AG04450 (cell line): ENCODE measurements at regions of chr2 and their contacts with region 1.

Region 1: DNA sequence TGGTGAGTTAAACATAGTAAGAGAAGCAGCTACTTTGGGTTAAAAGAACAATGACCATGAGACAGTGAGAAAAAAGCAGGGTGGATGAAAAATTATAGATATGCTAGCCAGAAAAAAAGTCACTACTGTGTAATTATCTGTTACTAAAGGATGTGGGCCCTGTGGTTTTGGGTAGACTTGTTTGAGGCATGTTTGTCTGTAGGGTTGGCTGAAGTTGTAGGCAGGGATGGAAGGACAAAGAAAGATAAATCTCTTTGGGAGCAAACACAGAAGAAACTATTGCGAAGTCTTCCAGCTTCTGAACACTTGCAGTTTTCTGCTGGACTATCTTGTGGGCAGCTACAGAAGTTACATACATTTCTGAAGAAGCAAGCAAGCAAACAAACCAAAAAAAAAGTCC is 28.2 kb downstream of the RND3 start:
- DNase-seq: no peak
- H3K4me3 ChIP-seq: no peak overlapping the region
- H3K27ac ChIP-seq: no peak overlapping the region
- H3K27me3 ChIP-seq: no peaks in the 10 kb centered on the region
- CTCF ChIP-seq: no peak

Region 2: DNA sequence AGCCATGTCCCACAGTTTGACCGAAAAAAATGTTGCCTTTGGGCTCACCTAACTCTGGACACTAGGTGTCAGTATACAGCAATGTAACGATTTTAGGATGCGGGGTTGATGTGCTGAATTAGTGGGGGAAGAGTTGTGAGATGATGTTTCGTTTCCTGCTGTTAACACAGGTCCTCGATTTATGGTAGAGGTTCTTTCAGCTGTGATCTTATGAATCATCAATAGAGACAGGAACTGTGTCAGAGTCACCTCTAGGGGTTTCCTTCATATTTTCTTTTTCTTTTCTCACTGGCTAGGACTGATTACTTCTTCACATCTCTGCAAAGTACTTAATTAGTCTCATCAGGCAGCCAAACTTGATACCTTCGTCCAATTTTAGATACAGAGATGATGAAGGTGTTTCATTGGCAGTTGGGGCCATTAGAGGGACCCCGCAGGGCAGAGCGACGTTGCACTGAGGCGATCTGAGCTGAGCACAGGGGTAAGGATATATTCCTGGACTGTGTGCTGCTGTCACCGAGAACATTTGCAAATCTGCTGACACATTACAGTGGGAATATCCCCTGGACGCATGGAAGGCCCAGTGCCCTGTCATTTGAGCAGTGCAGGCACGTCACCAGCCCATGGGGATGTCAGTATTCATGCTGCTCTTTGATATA is 861.5 kb before region 1 on chr2:
- CTCF ChIA-PET with region 1: interaction called, 12 read pairs
- POLR2A ChIA-PET with region 1: no interaction called
- DNase-seq: peak; percentile 84
- H3K4me3 ChIP-seq: peak overlapping the region; percentile 33
- H3K27ac ChIP-seq: peak overlapping the region; percentile 4
- H3K27me3 ChIP-seq: no peaks in the 10 kb centered on the region
- CTCF ChIP-seq: peak; percentile 84

Region 3: GRCh38 chr2:150320608-150321007 is 138.7 kb before region 1 on chr2:
- CTCF ChIA-PET with region 1: no interaction called
- POLR2A ChIA-PET with region 1: no interaction called
- DNase-seq: no peak
- H3K4me3 ChIP-seq: no peak overlapping the region
- H3K27ac ChIP-seq: no peak overlapping the region
- H3K27me3 ChIP-seq: no peaks in the 10 kb centered on the region
- CTCF ChIP-seq: no peak

Region 4: DNA sequence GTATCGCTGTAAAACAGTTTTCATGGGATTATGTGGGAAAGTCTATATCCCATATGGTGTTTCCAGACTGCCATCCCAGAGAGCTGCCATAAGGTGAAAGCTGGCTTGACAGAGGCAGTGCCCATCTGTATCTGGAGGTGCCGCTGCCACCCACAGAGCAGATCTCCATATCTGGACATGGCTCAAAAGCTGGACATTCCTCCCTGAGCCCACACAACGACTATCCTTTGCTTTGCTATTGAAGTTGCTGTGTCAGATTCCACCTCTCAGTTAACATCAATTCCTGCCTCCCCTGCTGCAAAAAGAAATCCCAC is 27.0 kb before region 1 on chr2:
- CTCF ChIA-PET with region 1: no interaction called
- POLR2A ChIA-PET with region 1: no interaction called
- DNase-seq: no peak
- H3K4me3 ChIP-seq: no peak overlapping the region
- H3K27ac ChIP-seq: no peak overlapping the region
- H3K27me3 ChIP-seq: no peaks in the 10 kb centered on the region
- CTCF ChIP-seq: no peak

Region 5: DNA sequence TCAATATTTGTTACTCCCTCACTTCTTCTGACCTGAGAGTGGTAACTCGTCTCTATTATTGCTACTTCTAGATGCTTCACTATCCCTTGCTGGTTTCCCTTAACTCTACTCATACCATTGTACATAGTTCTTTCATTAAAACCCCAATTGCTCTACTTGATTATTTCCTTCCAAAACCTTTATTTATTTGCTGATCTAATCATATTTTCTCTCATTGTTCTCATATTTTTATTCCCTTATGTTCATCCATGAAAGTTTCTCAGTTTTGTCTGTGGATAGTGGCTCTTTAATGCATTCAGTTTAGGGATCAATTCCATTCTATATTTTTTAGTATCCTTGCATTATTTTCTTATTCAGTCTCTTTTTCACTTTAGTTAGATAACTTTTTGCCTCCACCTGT is 13.9 kb before region 1 on chr2:
- CTCF ChIA-PET with region 1: no interaction called
- POLR2A ChIA-PET with region 1: no interaction called
- DNase-seq: no peak
- H3K4me3 ChIP-seq: no peak overlapping the region
- H3K27ac ChIP-seq: no peak overlapping the region
- H3K27me3 ChIP-seq: no peaks in the 10 kb centered on the region
- CTCF ChIP-seq: no peak